ENCODE measurements at regions of chr1 and their contacts with region 1.

Region 1: DNA sequence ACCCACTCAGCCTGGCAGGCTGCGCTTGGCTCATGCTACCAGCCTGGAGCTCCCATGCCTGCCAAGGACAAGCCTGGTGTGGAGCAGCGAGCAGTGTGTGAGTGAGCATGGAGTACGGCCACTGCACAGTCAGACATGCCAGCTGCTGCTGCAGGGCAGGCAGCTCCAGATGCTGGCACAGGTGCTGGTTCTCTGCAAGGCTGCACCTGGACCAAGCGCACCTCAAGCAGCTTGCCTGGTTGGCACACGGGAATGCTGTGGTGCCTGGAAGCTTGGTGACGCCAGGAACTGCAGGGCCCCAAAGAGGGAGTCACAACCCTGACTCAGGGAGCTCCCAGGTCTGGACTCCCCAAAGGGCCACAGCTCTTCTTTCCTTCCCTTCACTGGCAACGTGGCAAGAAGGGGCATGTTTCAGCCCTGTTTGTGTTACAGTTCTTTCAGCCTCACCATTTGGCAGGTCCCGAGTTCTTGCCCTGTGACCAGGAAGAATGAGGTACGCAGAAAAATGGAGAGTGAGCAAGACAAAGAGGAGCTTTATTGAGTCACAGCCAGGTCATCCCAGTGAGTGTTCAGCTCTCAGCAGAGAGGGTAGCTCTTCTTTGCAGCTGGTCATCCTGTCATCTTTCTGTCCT is 26.1 kb downstream of the ACOT7 start:
- DNase-seq: no peak
- ATAC-seq: no peak
- H3K4me3 ChIP-seq: no peak overlapping the region
- H3K27ac ChIP-seq: no peak overlapping the region
- H3K4me1 ChIP-seq: peaks cover 11% of the 10 kb centered on the region; the same call in 1 of the 2 replicates
- H3K27me3 ChIP-seq: no peaks in the 10 kb centered on the region
- CTCF ChIP-seq: no peak

Region 2: GRCh38 chr1:6261615-6261995 is 105.9 kb before region 1 on chr1:
- CTCF ChIA-PET with region 1: no interaction called
- POLR2A ChIA-PET with region 1: no interaction called
- in situ Hi-C with region 1: no loop called
- intact Hi-C with region 1: no loop called
- DNase-seq: no peak
- ATAC-seq: no peak
- H3K4me3 ChIP-seq: peak overlapping the region; percentile 54 to 56
- H3K27ac ChIP-seq: no peak overlapping the region
- H3K4me1 ChIP-seq: no peaks in the 10 kb centered on the region
- H3K27me3 ChIP-seq: no peaks in the 10 kb centered on the region
- CTCF ChIP-seq: no peak

Region 3: DNA sequence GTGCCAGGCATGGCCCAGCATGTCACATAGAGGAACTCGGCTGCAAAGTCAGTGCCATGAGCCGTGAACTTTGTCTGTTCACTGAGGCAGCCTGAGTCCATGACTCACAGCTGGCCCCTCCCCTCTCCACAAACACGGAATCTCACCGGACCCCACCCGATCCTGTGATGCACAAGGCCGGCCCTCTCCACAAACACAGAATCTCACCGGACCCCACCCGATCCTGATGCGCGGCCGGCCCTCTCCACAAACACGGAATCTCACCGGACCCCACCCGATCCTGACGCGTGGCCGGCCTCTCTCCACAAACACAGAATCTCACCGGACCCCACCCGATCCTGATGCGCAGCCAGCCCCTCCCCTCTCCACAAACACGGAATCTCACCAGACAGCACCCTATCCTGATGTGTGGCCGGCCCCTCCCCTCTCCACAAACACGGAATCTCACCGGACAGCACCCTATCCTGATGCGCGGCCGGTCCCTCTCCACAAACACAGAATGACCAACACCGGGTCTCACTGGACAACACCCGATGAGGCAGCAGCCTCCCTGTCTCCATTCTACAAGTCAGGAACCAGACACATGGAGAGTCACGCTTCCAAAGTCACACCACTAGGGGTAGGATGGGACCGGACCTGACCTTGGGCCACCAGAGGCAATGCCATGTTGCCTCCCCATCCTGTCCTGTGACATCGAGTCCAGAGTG is 67.0 kb before region 1 on chr1:
- CTCF ChIA-PET with region 1: no interaction called
- POLR2A ChIA-PET with region 1: no interaction called
- in situ Hi-C with region 1: no loop called
- intact Hi-C with region 1: no loop called
- DNase-seq: no peak
- ATAC-seq: 0 out of 2 replicates have a peak, but pooled peaks have one; percentile 52
- H3K4me3 ChIP-seq: no peak overlapping the region
- H3K27ac ChIP-seq: no peak overlapping the region
- H3K4me1 ChIP-seq: no peaks in the 10 kb centered on the region
- H3K27me3 ChIP-seq: no peaks in the 10 kb centered on the region
- CTCF ChIP-seq: no peak

Region 4: DNA sequence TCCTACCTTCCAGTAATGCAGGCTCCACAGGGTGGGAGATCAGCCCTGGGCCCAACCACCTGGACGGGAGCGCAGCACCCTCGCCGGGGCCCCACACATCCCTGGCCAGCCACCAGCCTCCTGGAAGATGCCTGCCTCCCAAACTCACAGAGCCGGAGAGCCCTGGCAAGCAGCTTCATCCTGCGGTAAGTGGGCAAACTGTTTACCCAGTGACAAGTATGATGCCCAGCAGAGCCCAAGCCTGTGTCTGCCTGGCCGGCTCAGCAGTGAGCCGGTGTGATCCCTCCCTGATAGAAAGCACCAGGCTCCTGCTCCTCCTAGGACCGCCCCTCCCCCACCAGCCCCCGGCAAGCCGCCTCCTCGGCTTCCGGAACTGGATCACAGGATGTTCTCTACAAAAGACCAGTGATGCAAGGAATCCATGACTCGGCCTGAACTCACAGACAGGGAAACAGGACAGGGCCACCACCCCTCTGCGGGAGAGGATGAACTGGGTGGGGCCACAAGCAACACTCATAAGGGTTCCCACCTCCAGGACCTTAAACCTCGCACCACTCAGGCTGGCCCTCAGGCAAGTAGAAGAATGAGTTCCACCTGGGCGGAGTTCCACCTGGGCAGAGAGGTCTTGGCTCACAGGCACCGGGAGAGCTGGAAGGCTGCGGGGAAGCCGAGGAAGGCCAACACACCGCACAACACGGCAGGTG is 18.1 kb after region 1 on chr1:
- CTCF ChIA-PET with region 1: interaction called, 11 read pairs
- POLR2A ChIA-PET with region 1: no interaction called
- in situ Hi-C with region 1: no loop called
- intact Hi-C with region 1: no loop called
- DNase-seq: peak; percentile 56
- ATAC-seq: peak; percentile 84
- H3K4me3 ChIP-seq: peak overlapping the region; percentile 25 to 54
- H3K27ac ChIP-seq: peak overlapping the region; percentile 90
- H3K4me1 ChIP-seq: peaks cover 28% of the 10 kb centered on the region
- H3K27me3 ChIP-seq: no peaks in the 10 kb centered on the region
- CTCF ChIP-seq: no peak

Region 5: DNA sequence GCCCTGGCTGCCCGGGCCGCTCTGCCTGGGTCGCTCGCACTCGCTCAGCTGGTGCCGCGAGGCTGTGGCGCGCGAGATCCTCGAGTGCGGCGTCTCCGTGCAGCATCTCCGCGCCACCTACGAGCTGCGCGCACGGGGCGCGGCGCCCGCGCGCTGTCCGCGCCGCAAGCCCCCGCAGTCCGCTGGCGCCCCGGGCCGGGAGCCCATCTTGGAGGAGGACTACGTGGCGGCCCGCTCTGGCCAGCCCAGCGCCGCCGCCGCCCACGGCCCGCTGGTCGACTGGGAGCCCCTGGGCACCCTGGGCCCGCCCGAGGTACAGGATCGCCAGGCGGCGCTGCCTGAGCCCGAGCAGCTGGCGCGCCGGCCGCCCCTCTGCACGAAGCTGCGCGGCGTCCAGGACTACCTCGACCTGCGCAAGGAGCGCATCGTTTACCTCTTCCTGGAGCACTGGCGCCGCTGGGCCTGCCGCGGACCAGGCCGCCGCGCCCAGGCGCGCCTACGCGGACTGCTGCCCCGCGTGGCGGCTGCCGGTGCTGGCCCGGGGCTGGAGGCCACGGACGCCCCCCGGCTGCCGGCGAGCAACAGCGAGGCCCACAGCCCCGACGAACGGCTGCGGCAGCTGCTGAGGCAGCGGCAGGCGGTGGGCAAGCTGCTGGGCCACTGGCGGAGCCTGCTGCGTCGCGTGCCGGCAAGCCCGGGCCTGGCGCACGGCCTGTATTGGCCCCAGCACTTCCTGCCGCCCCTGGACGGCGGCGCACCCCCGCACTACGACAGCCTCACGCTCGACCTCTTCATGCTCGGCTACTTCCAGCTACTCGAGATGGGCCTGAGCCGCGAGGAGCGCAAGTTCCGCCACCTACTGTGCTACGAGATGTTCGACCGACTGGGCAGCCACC is 87.6 kb after region 1 on chr1:
- CTCF ChIA-PET with region 1: interaction called, 12 read pairs
- POLR2A ChIA-PET with region 1: no interaction called
- in situ Hi-C with region 1: no loop called
- intact Hi-C with region 1: no loop called
- DNase-seq: no peak
- ATAC-seq: no peak
- H3K4me3 ChIP-seq: no peak overlapping the region
- H3K27ac ChIP-seq: no peak overlapping the region
- H3K4me1 ChIP-seq: no peaks in the 10 kb centered on the region
- H3K27me3 ChIP-seq: no peaks in the 10 kb centered on the region
- CTCF ChIP-seq: no peak

Measured in Panc1 (cell line).